ENCODE measurements at regions of chr16 and their contacts with region 1.

Region 1: GRCh38 chr16:68040507-68041288 is 17.6 kb downstream of the DUS2 start:
- H3K4me3 ChIP-seq: no peak overlapping the region
- H3K27ac ChIP-seq: no peak overlapping the region
- H3K4me1 ChIP-seq: no peaks in the 10 kb centered on the region
- CTCF ChIP-seq: peak; percentile 81

Region 2: GRCh38 chr16:67993189-67994039 is 47.3 kb before region 1 on chr16:
- CTCF ChIA-PET with region 1: interaction called, 12 read pairs
- POLR2A ChIA-PET with region 1: no interaction called
- H3K4me3 ChIP-seq: no peak overlapping the region
- H3K27ac ChIP-seq: no peak overlapping the region
- H3K4me1 ChIP-seq: no peaks in the 10 kb centered on the region
- CTCF ChIP-seq: peak; percentile 99

Region 3: GRCh38 chr16:68155425-68155824 is 114.7 kb after region 1 on chr16:
- CTCF ChIA-PET with region 1: no interaction called
- POLR2A ChIA-PET with region 1: no interaction called
- H3K4me3 ChIP-seq: no peak overlapping the region
- H3K27ac ChIP-seq: no peak overlapping the region
- H3K4me1 ChIP-seq: peaks cover 27% of the 10 kb centered on the region
- CTCF ChIP-seq: no peak

Region 4: DNA sequence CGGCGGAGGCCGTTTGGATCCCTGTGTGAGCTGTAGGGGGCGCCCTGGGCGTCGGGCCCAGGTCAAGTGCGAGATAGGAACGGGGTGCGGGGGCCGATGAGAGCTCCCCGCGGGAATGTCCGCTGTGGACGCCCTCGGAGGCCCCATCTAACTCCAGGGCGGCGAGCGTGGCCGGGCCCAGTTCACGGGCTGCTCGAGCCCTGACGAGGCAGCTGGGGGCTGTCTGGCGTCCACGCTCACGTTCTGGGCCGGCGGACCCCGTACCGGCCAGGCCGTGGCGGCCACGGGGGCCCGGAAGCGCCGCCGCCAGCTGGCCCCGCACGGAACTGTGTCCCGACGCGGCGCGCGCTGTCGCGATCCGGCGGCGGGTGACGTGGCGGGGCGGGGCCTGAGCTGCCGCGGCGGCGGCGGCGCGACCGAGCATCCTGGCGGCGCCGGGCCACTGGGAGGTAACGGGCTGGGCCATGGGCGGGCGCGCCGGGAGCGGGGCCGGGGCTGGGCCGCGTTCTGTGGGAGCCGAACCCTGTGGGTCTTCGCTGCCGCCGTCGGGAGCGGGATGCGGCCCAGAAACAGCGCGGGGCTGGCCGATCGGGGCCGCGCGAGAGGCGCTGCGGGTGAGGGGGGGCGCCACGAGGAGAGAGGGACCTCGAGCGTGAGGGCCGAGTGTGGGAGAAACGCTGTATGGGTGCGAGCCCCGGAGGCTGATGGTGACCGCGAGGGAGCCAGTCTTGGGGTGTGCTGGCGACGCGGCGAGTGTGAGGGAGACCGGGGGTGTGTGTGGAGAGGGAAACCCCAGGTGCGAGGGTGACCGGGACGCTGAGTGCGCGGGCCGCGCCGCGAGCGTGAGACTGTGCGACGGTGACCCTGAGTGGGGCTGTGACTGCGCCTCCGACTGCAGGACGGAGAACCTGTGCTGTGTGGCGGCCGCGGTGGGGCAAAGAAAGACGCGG is 223.7 kb after region 1 on chr16 and contains the start of gene SLC7A6:
- CTCF ChIA-PET with region 1: no interaction called
- POLR2A ChIA-PET with region 1: no interaction called
- H3K4me3 ChIP-seq: peak within 1 kb of the TSS; percentile 78
- H3K27ac ChIP-seq: peak within 1 kb of the TSS; percentile 87
- H3K4me1 ChIP-seq: peaks cover 17% of the 10 kb centered on the region
- CTCF ChIP-seq: peak; percentile 98

Region 5: GRCh38 chr16:68351962-68352431 is 311.3 kb after region 1 on chr16:
- CTCF ChIA-PET with region 1: no interaction called
- POLR2A ChIA-PET with region 1: no interaction called
- H3K4me3 ChIP-seq: no peak overlapping the region
- H3K27ac ChIP-seq: no peak overlapping the region
- H3K4me1 ChIP-seq: no peaks in the 10 kb centered on the region
- CTCF ChIP-seq: no peak